Motor neuron (in vitro differentiated cells): ENCODE measurements at regions of chr11 and their contacts with region 1.

Region 1: GRCh38 chr11:125164422-125165110 is at the start of gene PKNOX2:
- ATAC-seq: peak; percentile 69 to 81 (median 74)
- H3K4me3 ChIP-seq: peak within 1 kb of the TSS; percentile 60 to 85 (median 72)
- H3K27ac ChIP-seq: peak within 1 kb of the TSS; percentile 82 to 85
- H3K4me1 ChIP-seq: peaks cover 44 to 48% of the 10 kb centered on the region in 2 donors
- total RNA-seq, gene PKNOX2: 0.25 to 18.0 (median 9.1) TPM

Region 2: DNA sequence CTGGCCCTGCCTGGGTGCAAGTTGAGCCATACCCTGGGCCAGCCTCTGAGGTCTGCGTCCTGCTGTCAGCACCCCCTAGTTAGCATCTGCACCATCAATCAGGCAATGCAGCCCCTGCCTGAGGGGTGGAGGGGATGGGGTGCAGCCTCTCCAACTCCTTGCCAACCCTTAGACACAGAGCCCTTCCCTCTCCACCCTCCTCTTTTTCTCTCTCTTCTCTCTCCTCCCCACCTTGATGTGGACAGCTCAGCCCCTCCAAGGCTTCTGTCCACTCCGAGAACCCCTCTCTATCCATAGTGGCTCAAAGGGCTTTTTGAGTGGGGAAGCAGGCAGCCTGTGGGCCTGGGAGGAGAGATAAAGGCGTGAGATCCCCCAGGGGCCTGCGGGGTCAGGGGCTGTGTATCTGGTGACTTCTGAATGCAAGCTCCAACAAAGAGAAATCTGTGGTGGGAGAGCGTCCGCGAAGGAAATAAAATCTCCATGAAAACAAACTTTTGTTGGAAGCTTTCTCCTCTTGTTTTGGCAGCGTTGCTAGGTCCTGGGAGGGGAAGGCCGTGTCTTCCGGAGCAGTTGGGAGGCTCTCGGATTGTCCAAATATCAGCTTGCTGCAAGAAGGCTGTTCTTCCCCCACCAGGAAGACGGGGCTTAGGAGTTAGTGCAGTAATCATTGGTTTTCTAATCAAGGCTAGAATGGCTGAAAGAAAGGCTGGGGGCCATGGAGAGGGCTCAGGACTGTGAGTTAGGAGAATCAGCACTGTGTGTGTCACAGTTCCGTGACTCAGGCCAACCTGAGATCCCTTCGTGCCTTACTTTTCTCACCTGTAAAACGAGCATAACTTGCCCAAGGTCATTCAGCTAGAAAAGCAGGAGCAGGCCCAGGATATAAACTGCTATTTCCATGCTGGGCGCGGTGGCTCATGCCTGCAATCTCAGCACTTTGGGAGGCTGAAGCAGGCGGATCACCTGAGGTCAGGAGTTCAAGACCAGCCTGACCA is 50.3 kb after region 1 on chr11:
- in situ Hi-C with region 1: loop called in 1 of 9 experiments (anchors 10 kb)
- ATAC-seq: peak in 5 of 8 experiments; percentile 62 to 71 (median 65)
- H3K4me3 ChIP-seq: no peak overlapping the region
- H3K27ac ChIP-seq: peak overlapping the region; percentile 34 to 42
- H3K4me1 ChIP-seq: peaks cover 60 to 61% of the 10 kb centered on the region in 2 donors

Region 3: DNA sequence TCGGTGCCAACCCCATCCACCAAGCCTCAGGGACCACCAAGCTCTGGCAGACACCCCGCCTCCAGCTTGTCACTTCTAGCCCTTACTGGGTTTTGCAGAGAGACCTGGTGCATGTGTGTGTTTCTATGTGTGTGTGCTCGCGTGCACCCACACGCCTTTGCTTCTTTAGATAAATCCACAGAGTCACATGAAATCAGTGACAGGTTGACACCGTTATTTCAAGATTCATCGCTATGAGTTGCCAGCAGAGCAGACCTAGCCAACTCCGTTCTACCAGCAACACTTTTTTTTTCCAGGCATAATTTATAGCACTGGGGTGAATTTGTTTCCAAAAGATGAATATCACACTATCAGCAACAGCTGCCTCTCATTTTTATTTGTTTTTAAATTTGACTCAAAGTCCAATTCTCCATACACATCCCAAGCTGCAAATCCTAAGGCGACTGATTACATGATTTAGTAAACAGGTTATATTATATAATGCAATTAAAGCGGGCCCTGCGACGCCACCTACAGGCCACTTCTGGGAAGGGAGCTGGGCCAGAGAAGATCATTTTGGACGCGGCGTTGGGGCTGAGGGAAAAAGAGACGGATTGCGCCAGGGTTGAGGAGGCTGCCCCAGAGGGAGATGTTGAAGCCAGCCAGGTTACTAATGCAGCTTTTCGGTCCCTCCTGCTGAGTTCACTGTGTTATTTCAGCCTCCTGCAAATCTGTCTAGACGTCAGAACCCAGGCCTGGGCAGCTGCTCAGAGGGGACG is 181.0 kb after region 1 on chr11:
- in situ Hi-C with region 1: loop called in 4 of 9 experiments (anchors 10 to 25 kb)
- ATAC-seq: peak; percentile 66 to 86 (median 70)
- H3K4me3 ChIP-seq: no peak overlapping the region
- H3K27ac ChIP-seq: peak overlapping the region in 1 of 2 donors; percentile 54
- H3K4me1 ChIP-seq: peaks cover 85 to 91% of the 10 kb centered on the region in 2 donors